ENCODE measurements at regions of chr5 and their contacts with region 1.

Region 1: DNA sequence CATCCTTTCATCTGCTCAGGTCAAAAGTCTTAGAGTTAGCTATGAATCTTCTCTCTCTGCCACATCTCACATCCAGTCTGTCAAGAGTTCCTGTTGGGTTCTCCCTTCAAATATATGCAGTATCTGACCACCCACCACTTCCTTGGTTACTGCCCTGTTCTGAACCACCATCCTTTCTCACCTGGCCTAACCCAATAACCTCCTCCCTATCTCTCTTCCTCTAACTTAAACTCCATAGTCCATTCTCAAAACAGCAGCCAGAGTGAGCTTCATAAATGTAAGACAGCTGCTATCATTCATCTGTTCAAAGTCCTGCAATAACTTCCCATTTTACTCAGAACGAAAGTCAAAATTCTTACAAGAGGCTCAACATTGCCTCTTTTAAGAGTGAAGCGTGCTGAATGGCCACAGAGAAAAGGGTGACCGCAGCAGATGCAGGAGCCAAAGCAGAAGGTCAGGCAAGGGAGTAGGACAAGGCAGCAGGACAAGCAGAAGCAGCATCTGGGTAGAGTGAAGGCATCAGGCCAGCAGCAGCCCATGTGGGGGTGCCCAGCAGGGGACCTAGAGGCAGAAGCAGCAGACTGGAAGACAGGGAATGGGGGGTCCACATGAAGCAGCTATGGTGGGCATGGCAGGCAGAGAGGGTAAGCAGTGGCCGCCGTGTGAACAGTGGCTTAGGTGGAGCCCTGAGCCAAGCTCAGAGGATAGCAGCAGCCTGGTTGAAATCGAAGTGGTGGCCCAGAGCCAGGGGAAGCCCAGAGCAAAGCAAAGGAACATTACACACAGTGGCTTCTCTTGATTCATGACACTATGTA is 39.3 kb upstream of the CDC42SE2 start:
- DNase-seq: no peak
- H3K4me3 ChIP-seq: no peak overlapping the region
- H3K27ac ChIP-seq: no peak overlapping the region
- H3K4me1 ChIP-seq: peaks cover 9% of the 10 kb centered on the region
- H3K27me3 ChIP-seq: no peaks in the 10 kb centered on the region
- CTCF ChIP-seq: no peak

Region 2: DNA sequence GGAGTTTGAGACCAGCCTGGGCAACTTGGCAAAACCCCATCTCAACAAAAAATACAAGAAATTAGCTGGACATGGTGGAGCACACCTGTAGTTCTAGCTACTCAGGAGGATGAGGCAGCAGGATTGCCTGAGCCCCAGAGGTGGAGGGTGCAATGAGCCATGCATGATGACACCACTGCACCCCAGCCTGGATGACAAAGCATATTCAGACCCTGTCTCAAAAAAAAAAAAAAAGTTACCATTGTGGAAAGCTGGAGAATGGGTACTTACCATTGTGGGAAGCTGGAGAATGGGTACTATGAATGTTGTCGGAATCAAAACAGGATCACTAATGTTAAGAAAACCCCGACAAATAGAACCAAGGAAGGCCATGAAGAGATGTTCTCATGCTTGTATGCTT is 85.3 kb before region 1 on chr5:
- CTCF ChIA-PET with region 1: no interaction called
- dilution Hi-C with region 1: no loop called
- in situ Hi-C with region 1: no loop called
- intact Hi-C with region 1: no loop called
- DNase-seq: no peak
- H3K4me3 ChIP-seq: no peak overlapping the region
- H3K27ac ChIP-seq: no peak overlapping the region
- H3K4me1 ChIP-seq: no peaks in the 10 kb centered on the region
- H3K27me3 ChIP-seq: no peaks in the 10 kb centered on the region
- CTCF ChIP-seq: no peak

Region 3: DNA sequence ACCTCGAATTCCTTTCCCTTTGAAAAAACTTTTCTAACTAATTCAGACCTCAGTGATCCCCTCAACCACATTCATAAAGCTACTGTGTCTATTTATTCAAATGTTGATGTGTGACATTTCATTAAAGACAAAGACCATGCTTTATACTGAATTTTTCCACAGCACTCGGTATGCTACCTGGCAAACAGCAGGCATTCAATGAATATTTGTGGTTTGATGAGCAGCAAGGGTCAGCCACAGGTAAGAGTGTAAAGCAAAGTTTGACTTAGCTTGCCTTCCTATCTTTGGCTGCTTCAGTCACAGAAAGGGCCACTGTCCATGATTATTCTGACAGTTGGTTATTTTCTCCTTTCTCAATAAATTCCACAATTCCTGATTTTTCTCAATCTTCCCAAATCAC is 34.1 kb after region 1 on chr5:
- CTCF ChIA-PET with region 1: no interaction called
- dilution Hi-C with region 1: loop called (anchors 5 kb)
- in situ Hi-C with region 1: no loop called
- intact Hi-C with region 1: no loop called
- DNase-seq: peak; percentile 66
- H3K4me3 ChIP-seq: no peak overlapping the region
- H3K27ac ChIP-seq: no peak overlapping the region
- H3K4me1 ChIP-seq: peaks cover 44% of the 10 kb centered on the region
- H3K27me3 ChIP-seq: no peaks in the 10 kb centered on the region
- CTCF ChIP-seq: no peak

Measured in mammary epithelial cell (primary cell).